ENCODE measurements at regions of chr7 and their contacts with region 1.

Region 1: DNA sequence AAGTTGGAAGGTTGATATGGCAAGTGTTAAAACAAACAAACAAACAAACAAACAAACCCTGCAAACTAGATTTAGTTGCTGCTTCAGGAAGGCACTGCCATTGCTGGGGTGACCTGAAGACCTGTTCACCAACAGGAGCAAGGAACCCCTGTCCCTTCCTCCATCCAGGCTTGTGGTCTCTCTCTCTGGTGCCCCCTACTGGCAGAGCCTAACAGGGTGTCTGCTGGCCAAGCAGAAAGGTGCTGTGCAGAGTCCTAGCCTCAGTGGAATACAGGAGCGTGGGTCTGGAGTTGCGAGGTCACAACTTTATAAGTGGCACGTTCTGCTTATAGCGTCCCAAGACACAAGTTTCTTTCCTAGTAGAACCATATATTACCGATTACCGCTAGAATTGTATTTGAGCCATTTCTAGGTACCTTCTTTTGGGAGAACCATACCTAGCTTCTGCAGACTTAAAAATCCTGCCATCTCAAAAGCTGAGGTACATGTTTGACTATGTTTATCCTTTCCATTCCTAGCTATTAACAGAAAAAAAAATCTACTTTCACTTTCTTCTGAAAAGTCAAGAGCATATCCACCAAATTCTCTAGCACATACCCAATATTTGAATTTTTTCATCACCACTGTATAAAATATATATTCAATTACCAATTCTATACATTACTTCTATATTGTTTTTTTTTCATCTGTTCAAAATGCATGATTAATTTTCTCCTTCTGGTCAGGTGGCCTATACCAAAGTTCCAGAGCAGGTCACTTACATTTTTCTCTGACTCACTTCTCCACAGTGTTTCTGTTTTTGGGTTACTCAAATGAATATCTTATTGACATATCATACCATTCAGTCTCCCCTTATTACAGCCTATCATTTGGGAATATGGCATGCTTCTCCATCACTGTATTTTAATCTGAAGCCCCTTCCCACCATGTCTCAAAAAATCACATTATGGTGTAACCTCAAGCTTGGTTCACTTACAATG is 29.1 kb upstream of the CALD1 start:
- DNase-seq: peak; percentile 83
- H3K4me3 Mint-ChIP-seq: no peak overlapping the region
- H3K27ac Mint-ChIP-seq: no peak overlapping the region
- H3K4me1 Mint-ChIP-seq: peaks cover 11% of the 10 kb centered on the region
- H3K27me3 Mint-ChIP-seq: no peaks in the 10 kb centered on the region

Region 2: DNA sequence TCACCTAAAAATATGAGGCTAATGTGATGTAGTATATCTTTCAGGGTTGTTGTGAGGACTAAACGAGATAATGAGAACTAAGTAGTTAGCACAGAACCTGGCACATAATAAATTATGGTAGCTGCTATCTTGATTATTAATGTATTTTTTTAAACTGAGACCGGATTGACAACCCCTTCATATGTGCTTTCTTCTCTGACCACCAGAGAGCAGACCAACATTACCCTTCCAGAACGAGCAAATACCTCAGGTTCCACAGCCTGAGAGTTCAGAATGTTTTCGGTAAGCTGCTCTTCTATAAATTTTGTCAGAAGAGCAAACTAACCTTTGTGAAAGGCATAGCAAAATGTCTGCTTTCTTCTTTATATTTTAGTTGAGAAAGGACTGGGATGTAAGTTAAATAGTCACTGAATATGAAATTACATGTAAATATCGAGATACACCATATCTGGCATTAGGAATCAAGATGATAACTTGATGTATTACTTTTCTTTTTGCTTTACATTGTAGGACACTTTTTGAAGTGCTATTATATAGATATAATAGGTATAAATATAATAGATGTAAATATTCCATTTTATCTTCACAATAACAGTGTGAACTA is 117.3 kb before region 1 on chr7:
- CTCF ChIA-PET with region 1: interaction called, 110 read pairs
- POLR2A ChIA-PET with region 1: interaction called, 3 read pairs
- intact Hi-C with region 1: loop called (anchors 1 kb)
- DNase-seq: peak; percentile 29
- H3K4me3 Mint-ChIP-seq: no peak overlapping the region
- H3K27ac Mint-ChIP-seq: no peak overlapping the region
- H3K4me1 Mint-ChIP-seq: peaks cover 23% of the 10 kb centered on the region
- H3K27me3 Mint-ChIP-seq: peaks cover 13% of the 10 kb centered on the region

Region 3: GRCh38 chr7:134690016-134690415 is 60.4 kb before region 1 on chr7:
- CTCF ChIA-PET with region 1: interaction called, 25 read pairs
- POLR2A ChIA-PET with region 1: no interaction called
- intact Hi-C with region 1: loop called (anchors 1 kb)
- DNase-seq: no peak
- H3K4me3 Mint-ChIP-seq: no peak overlapping the region
- H3K27ac Mint-ChIP-seq: no peak overlapping the region
- H3K4me1 Mint-ChIP-seq: no peaks in the 10 kb centered on the region
- H3K27me3 Mint-ChIP-seq: no peaks in the 10 kb centered on the region

Region 4: DNA sequence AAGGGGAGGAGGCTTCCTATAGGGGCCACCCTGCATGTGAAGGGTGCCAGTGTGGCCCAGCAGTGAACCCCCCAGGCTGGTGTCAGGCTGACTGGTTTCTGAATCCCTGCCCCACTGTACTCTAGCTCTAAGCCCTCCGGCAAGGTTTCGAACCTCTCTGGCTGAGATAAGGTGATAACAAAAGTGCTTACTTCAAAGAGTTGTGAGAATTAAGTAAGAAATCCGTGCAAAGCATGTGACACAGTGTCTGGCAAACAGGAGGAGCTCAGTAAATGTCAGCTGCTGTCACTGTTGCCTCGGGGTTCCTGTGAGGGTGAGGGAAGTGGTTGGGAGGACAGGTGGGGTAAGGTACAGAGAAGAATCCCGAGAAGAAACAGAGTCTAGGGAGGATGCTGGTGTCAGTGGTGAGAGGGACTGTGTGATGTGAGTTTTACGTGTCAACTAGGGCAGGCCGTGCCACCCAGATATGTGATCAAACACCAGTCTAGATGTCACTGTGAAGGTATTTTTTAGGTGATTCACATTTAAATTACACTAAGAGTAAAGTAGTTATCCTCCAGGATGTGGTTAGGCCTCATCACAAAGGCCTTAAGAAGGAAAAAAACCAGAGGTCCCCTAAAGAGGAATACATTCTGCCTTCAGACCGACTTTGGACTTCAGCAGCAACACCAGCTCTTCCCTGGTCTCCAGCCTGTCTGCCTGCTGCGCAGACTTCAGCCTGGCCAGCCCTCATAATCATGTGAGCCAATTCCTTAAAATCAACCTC is 39.3 kb before region 1 on chr7:
- CTCF ChIA-PET with region 1: interaction called, 3 read pairs
- POLR2A ChIA-PET with region 1: no interaction called
- intact Hi-C with region 1: loop called (anchors 5 kb)
- DNase-seq: peak; percentile 78
- H3K4me3 Mint-ChIP-seq: peak overlapping the region; percentile 76
- H3K27ac Mint-ChIP-seq: peak overlapping the region; percentile 97
- H3K4me1 Mint-ChIP-seq: peaks cover 30% of the 10 kb centered on the region
- H3K27me3 Mint-ChIP-seq: no peaks in the 10 kb centered on the region

Region 5: DNA sequence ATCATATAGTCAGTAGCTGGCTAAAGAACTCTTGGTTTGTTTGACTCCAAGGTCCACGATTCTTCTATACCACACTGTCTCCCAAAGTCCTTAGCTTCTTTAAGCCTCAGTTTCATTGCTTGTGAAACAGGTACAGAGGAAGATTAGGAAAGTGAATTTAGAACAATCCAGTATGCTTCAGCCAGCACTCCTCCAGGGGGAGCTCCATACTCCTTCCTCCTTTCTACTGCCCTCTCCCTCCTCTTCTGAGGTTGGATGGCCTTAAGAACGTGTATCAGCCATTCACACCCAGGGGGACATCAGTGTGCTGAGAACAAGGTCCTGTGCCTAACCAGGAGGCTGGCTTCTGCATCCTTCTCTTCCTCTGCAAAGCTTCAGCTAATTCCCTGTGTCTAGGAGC is 25.8 kb before region 1 on chr7:
- CTCF ChIA-PET with region 1: interaction called, 60 read pairs
- POLR2A ChIA-PET with region 1: no interaction called
- intact Hi-C with region 1: loop called (anchors 1 kb)
- DNase-seq: peak; percentile 41
- H3K4me3 Mint-ChIP-seq: no peak overlapping the region
- H3K27ac Mint-ChIP-seq: no peak overlapping the region
- H3K4me1 Mint-ChIP-seq: no peaks in the 10 kb centered on the region
- H3K27me3 Mint-ChIP-seq: no peaks in the 10 kb centered on the region

Region 6: GRCh38 chr7:134732728-134733127 is 17.6 kb before region 1 on chr7:
- CTCF ChIA-PET with region 1: interaction called, 60 read pairs
- POLR2A ChIA-PET with region 1: no interaction called
- intact Hi-C with region 1: loop called (anchors 2 kb)
- DNase-seq: no peak
- H3K4me3 Mint-ChIP-seq: no peak overlapping the region
- H3K27ac Mint-ChIP-seq: peak overlapping the region; percentile 26
- H3K4me1 Mint-ChIP-seq: peaks cover 44% of the 10 kb centered on the region
- H3K27me3 Mint-ChIP-seq: no peaks in the 10 kb centered on the region

Region 7: GRCh38 chr7:135274495-135275268 is 524.3 kb after region 1 on chr7:
- CTCF ChIA-PET with region 1: no interaction called
- POLR2A ChIA-PET with region 1: no interaction called
- intact Hi-C with region 1: no loop called
- DNase-seq: peak; percentile 84
- H3K4me3 Mint-ChIP-seq: no peak overlapping the region
- H3K27ac Mint-ChIP-seq: no peak overlapping the region
- H3K4me1 Mint-ChIP-seq: no peaks in the 10 kb centered on the region
- H3K27me3 Mint-ChIP-seq: no peaks in the 10 kb centered on the region